GM12878 (cell line): ENCODE measurements at regions of chr4 and their contacts with region 1.

Region 1: DNA sequence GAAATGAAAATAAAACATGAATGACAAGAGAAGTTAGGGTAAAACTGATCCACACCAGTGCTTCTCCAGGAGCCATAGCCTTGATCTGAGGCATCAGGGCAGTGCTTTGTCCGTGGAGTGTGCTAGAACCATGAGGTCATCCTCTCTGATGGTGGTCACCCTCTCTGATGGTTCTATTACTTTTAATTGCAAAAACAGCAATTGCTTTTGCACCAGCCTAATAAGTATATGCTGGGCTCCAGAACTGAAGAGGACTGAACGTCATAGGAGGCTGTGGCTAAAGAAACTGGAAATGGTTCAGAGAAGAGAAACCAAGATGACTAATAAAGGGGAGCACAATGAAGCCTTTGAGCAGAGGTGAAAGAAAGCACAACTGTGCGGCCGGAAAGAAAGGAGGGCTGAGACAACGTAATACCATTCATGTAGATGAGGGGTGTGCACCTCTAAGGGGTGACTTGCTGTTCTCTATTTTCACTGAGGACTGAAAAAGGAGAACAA is 17.0 kb upstream of the TMEM154 start:
- DNase-seq: peak; percentile 98
- ATAC-seq: peak; percentile 97
- H3K4me3 ChIP-seq: peak overlapping the region; percentile 42; the same call in 1 of the 2 replicates
- H3K27ac ChIP-seq: peak overlapping the region; percentile 71
- H3K4me1 ChIP-seq: peaks cover 20% of the 10 kb centered on the region
- H3K27me3 ChIP-seq: no peaks in the 10 kb centered on the region
- CTCF ChIP-seq: no peak
- EP300 ChIP-seq: peak; percentile 85 to 93; a peak in 3 of 4 replicates
- POLR2A ChIP-seq: no peak
- RAD21 ChIP-seq: no peak

Region 2: GRCh38 chr4:152510349-152511147 is 186.3 kb before region 1 on chr4:
- CTCF ChIA-PET with region 1: no interaction called
- POLR2A ChIA-PET with region 1: no interaction called
- RAD21 ChIA-PET with region 1: no interaction called
- SMC1A ChIA-PET with region 1: no interaction called
- in situ Hi-C with region 1: no loop called
- intact Hi-C with region 1: no loop called
- DNase-seq: no peak
- ATAC-seq: peak; percentile 71
- H3K4me3 ChIP-seq: peak overlapping the region; percentile 61; the same call in 1 of the 2 replicates
- H3K27ac ChIP-seq: peak overlapping the region; percentile 74
- H3K4me1 ChIP-seq: peaks cover 24% of the 10 kb centered on the region
- H3K27me3 ChIP-seq: no peaks in the 10 kb centered on the region
- CTCF ChIP-seq: no peak
- EP300 ChIP-seq: no peak
- POLR2A ChIP-seq: no peak
- RAD21 ChIP-seq: no peak

Region 3: GRCh38 chr4:152709683-152710438 is 13.0 kb after region 1 on chr4:
- CTCF ChIA-PET with region 1: interaction called, 18 read pairs
- POLR2A ChIA-PET with region 1: interaction called, 14 read pairs
- RAD21 ChIA-PET with region 1: interaction called, 8 read pairs
- SMC1A ChIA-PET with region 1: interaction called, 23 read pairs
- in situ Hi-C with region 1: no loop called
- intact Hi-C with region 1: no loop called
- DNase-seq: peak; percentile 42
- ATAC-seq: peak; percentile 95
- H3K4me3 ChIP-seq: no peak overlapping the region
- H3K27ac ChIP-seq: peak overlapping the region; percentile 45
- H3K4me1 ChIP-seq: peaks cover 11% of the 10 kb centered on the region
- H3K27me3 ChIP-seq: no peaks in the 10 kb centered on the region
- CTCF ChIP-seq: no peak
- EP300 ChIP-seq: no peak; a peak in 1 of 4 replicates
- POLR2A ChIP-seq: no peak
- RAD21 ChIP-seq: no peak